Ascending aorta (tissue), 2 donors: ENCODE measurements at regions of chr4 and their contacts with region 1.

Region 1: DNA sequence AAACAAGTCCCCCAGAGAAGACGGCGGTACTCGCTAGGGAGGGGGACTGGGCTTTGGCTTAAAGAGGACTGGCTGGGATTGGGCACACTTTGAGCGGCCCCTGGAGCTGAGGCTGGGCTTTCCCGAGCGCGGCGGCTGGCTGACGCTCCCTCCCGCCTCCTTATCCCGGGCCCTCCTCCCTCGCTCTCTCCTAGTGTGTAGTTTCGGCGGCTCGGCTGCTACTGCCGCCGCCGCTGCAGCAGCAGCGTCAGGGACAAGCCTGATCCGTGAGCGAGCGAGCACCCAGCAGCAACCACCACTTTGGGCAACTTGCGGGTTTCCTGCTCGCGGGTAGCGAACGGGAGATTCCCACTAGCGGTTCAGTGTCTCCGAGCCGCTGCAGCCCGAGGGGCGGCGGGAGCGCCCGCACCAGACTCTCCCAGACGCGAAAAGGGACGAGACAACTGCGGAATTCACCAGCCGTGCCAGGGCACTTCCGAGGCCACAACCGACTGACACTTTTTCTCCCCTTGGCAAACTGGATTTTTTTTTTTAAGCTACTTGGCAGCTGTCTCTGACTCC is 629 bp upstream of the PCDH7 start:
- DNase-seq: peak in 1 of 2 donors; percentile 93
- H3K4me3 ChIP-seq: peak overlapping the region; percentile 57 to 85
- H3K27ac ChIP-seq: peak overlapping the region; percentile 76 to 85
- H3K4me1 ChIP-seq: no peaks in the 10 kb centered on the region
- H3K27me3 ChIP-seq: no peaks in the 10 kb centered on the region
- CTCF ChIP-seq: no peak

Region 2: GRCh38 chr4:30757357-30757756 is 37.8 kb after region 1 on chr4:
- intact Hi-C with region 1: loop called (anchors 5 kb)
- DNase-seq: no peak
- H3K4me3 ChIP-seq: no peak overlapping the region
- H3K27ac ChIP-seq: no peak overlapping the region
- H3K4me1 ChIP-seq: peaks cover 0 to 20% of the 10 kb centered on the region in 2 donors
- H3K27me3 ChIP-seq: no peaks in the 10 kb centered on the region
- CTCF ChIP-seq: no peak

Region 3: GRCh38 chr4:30770049-30770549 is 50.6 kb after region 1 on chr4:
- intact Hi-C with region 1: loop called (anchors 1 kb)
- DNase-seq: no peak
- H3K4me3 ChIP-seq: no peak overlapping the region
- H3K27ac ChIP-seq: peak overlapping the region in 1 of 2 donors; percentile 20
- H3K4me1 ChIP-seq: peaks cover 5 to 28% of the 10 kb centered on the region in 2 donors
- H3K27me3 ChIP-seq: no peaks in the 10 kb centered on the region
- CTCF ChIP-seq: no peak

Region 4: GRCh38 chr4:30802622-30803323 is 83.2 kb after region 1 on chr4:
- intact Hi-C with region 1: loop called (anchors 5 kb)
- DNase-seq: no peak
- H3K4me3 ChIP-seq: no peak overlapping the region
- H3K27ac ChIP-seq: peak overlapping the region in 1 of 2 donors; percentile 63
- H3K4me1 ChIP-seq: peaks cover 0 to 9% of the 10 kb centered on the region in 2 donors
- H3K27me3 ChIP-seq: no peaks in the 10 kb centered on the region
- CTCF ChIP-seq: no peak

Region 5: GRCh38 chr4:30866346-30866745 is 146.8 kb after region 1 on chr4:
- intact Hi-C with region 1: loop called (anchors 5 kb)
- DNase-seq: no peak
- H3K4me3 ChIP-seq: peak overlapping the region; percentile 20 to 41
- H3K27ac ChIP-seq: peak overlapping the region; percentile 71 to 81
- H3K4me1 ChIP-seq: peaks cover 11 to 27% of the 10 kb centered on the region in 2 donors
- H3K27me3 ChIP-seq: no peaks in the 10 kb centered on the region
- CTCF ChIP-seq: no peak

Region 6: DNA sequence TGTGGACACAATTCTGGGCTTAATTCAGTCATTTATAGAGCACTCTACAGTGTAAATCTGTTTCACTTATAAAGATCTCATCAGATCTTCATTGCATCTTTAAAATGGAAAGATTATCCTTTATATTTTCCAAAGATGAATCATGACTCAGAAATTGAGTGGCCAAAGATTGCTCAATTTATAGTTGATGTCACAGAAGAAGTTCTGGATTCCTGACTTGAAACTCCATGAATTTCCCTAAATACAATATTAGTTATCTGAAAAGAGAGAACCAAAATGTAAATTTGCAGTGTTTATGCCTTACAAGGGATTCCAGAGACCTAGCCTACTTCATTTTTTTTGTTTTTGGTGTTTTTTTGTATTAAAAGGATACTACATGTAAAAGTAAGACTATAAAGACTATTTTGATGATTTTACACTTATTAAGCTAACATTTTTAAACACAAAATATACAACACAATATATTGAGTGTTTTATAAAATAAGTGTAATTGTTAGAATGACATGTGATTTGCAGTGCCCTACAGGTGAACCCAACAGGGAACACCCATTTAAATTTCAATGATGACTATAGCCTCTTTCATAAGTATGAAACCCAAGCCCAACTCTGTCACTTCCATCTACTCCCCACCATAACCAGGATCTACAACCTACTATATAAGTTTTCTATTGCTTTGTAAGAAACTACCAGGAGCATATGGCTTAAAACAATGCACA is 184.1 kb after region 1 on chr4:
- intact Hi-C with region 1: loop called (anchors 5 kb)
- DNase-seq: no peak
- H3K4me3 ChIP-seq: no peak overlapping the region
- H3K27ac ChIP-seq: peak overlapping the region; percentile 64 to 82
- H3K4me1 ChIP-seq: peaks cover 0 to 19% of the 10 kb centered on the region in 2 donors
- H3K27me3 ChIP-seq: no peaks in the 10 kb centered on the region
- CTCF ChIP-seq: no peak

Region 7: GRCh38 chr4:30948653-30949052 is 229.1 kb after region 1 on chr4:
- intact Hi-C with region 1: loop called (anchors 5 kb)
- DNase-seq: no peak
- H3K4me3 ChIP-seq: no peak overlapping the region
- H3K27ac ChIP-seq: peak overlapping the region in 1 of 2 donors; percentile 18
- H3K4me1 ChIP-seq: peaks cover 4 to 13% of the 10 kb centered on the region in 2 donors
- H3K27me3 ChIP-seq: no peaks in the 10 kb centered on the region
- CTCF ChIP-seq: no peak